ENCODE measurements at regions of chr1 and their contacts with region 1.

Region 1: DNA sequence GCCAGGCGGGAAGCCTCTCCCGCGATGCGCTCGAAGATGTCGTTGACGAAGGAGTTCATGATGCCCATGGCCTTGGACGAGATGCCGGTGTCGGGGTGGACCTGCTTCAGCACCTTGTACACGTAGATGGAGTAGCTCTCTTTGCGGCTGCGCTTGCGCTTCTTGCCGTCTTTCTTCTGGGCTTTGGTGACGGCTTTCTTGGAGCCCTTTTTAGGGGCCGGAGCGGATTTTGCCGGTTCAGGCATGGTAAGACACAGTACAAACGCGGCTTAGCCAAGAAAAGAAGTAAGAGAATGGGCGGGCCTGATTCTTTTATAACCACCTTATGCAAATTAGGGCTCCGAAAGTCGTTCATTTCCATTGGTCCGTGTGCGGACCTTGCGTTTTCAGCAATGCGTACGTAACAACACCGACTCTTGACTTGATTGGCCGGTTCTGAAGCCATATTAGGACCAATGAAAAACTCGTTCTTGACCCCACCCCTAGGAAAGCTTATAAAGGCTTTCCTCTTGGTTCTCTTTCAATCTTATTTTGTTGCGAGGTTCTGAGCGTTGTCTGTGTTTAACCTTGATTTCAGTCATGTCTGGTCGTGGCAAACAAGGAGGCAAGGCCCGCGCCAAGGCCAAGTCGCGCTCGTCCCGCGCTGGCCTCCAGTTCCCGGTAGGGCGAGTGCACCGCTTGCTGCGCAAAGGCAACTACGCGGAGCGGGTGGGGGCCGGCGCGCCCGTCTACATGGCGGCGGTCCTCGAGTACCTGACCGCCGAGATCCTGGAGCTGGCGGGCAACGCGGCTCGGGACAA is 12.8 kb upstream of the BOLA1 start:
- DNase-seq: peak; percentile 91
- H3K4me3 Mint-ChIP-seq: no peak overlapping the region
- H3K27ac Mint-ChIP-seq: no peak overlapping the region
- H3K4me1 Mint-ChIP-seq: peaks cover 10% of the 10 kb centered on the region
- H3K27me3 Mint-ChIP-seq: no peaks in the 10 kb centered on the region

Region 2: GRCh38 chr1:149844101-149844500 is 42.5 kb before region 1 on chr1:
- CTCF ChIA-PET with region 1: interaction called, 3 read pairs
- POLR2A ChIA-PET with region 1: interaction called, 118 read pairs
- intact Hi-C with region 1: no loop called
- DNase-seq: peak; percentile 36
- H3K4me3 Mint-ChIP-seq: peak overlapping the region; percentile 84
- H3K27ac Mint-ChIP-seq: peak overlapping the region; percentile 92
- H3K4me1 Mint-ChIP-seq: peaks cover 48% of the 10 kb centered on the region
- H3K27me3 Mint-ChIP-seq: no peaks in the 10 kb centered on the region

Region 3: GRCh38 chr1:149899460-149900293 is 13.1 kb after region 1 on chr1 and contains the start of gene BOLA1:
- CTCF ChIA-PET with region 1: interaction called, 7 read pairs
- POLR2A ChIA-PET with region 1: interaction called, 29 read pairs
- intact Hi-C with region 1: no loop called
- DNase-seq: peak; percentile 90
- H3K4me3 Mint-ChIP-seq: peak within 1 kb of the TSS; percentile 90
- H3K27ac Mint-ChIP-seq: peak within 1 kb of the TSS; percentile 94
- H3K4me1 Mint-ChIP-seq: peaks cover 19% of the 10 kb centered on the region
- H3K27me3 Mint-ChIP-seq: no peaks in the 10 kb centered on the region
- total RNA-seq, gene BOLA1: 27.9 to 29.6 TPM

Region 4: DNA sequence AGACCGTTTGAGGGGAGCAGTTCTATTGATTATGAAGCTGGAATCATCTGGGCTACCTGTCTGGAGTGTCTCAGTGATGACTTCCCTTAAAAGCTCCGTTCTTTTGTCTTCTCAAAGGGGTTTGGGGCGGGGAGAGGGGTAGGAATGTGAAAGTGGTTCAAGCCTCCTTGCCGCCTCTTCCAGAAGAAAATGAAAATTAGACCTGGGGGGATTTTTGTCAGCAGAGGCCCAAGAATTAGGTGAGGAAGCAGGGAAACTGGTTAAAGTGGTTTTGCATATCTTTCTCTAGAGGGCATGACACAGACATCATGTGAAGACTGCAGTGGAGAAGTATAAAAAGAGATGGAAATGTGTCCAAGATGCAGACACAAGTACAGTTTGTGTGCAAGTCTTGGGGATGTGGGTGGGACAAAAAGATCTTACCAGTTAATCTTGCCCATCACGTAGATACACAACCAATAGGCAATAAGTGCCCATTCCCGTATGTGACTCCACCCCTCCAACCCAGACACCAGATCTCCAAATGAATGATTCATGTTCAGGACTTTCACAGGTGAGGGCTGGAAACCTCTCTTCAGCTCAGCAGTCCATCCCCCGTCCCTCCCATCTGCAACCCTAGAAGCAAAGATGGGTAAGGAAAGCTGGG is 50.6 kb after region 1 on chr1:
- CTCF ChIA-PET with region 1: no interaction called
- POLR2A ChIA-PET with region 1: interaction called, 13 read pairs
- intact Hi-C with region 1: no loop called
- DNase-seq: no peak
- H3K4me3 Mint-ChIP-seq: no peak overlapping the region
- H3K27ac Mint-ChIP-seq: peak overlapping the region; percentile 25
- H3K4me1 Mint-ChIP-seq: peaks cover 31% of the 10 kb centered on the region
- H3K27me3 Mint-ChIP-seq: no peaks in the 10 kb centered on the region

Region 5: GRCh38 chr1:150010393-150011115 is 124.0 kb after region 1 on chr1 and contains the start of gene OTUD7B:
- CTCF ChIA-PET with region 1: interaction called, 8 read pairs
- POLR2A ChIA-PET with region 1: interaction called, 57 read pairs
- intact Hi-C with region 1: no loop called
- DNase-seq: peak; percentile 87
- H3K4me3 Mint-ChIP-seq: peak within 1 kb of the TSS; percentile 99
- H3K27ac Mint-ChIP-seq: peak within 1 kb of the TSS; percentile 98
- H3K4me1 Mint-ChIP-seq: peaks cover 39% of the 10 kb centered on the region
- H3K27me3 Mint-ChIP-seq: no peaks in the 10 kb centered on the region
- total RNA-seq, gene OTUD7B: 23.8 to 24.7 TPM

Region 6: GRCh38 chr1:150024156-150024555 is 137.6 kb after region 1 on chr1:
- CTCF ChIA-PET with region 1: no interaction called
- POLR2A ChIA-PET with region 1: no interaction called
- intact Hi-C with region 1: no loop called
- DNase-seq: no peak
- H3K4me3 Mint-ChIP-seq: no peak overlapping the region
- H3K27ac Mint-ChIP-seq: no peak overlapping the region
- H3K4me1 Mint-ChIP-seq: no peaks in the 10 kb centered on the region
- H3K27me3 Mint-ChIP-seq: no peaks in the 10 kb centered on the region

Region 7: DNA sequence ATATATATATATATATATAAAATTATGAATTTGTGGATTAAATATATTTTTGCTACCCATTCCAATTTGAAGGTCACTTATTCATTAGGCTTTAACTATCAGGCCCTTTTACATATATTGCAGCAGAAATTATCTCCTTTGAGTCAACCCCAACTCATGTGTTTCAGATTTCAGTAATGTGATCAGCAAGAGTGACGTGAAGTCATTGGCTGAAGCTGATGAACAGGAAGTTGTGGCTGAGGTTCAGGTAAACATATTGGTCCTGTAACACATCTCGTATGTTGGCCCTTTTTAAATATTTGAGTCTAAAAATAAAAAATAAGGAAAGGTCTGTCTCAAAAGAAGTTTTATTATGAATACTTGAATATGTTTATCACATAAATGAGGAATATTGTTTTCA is 189.5 kb after region 1 on chr1:
- CTCF ChIA-PET with region 1: no interaction called
- POLR2A ChIA-PET with region 1: no interaction called
- intact Hi-C with region 1: no loop called
- DNase-seq: no peak
- H3K4me3 Mint-ChIP-seq: no peak overlapping the region
- H3K27ac Mint-ChIP-seq: no peak overlapping the region
- H3K4me1 Mint-ChIP-seq: peaks cover 11% of the 10 kb centered on the region
- H3K27me3 Mint-ChIP-seq: no peaks in the 10 kb centered on the region

Region 8: DNA sequence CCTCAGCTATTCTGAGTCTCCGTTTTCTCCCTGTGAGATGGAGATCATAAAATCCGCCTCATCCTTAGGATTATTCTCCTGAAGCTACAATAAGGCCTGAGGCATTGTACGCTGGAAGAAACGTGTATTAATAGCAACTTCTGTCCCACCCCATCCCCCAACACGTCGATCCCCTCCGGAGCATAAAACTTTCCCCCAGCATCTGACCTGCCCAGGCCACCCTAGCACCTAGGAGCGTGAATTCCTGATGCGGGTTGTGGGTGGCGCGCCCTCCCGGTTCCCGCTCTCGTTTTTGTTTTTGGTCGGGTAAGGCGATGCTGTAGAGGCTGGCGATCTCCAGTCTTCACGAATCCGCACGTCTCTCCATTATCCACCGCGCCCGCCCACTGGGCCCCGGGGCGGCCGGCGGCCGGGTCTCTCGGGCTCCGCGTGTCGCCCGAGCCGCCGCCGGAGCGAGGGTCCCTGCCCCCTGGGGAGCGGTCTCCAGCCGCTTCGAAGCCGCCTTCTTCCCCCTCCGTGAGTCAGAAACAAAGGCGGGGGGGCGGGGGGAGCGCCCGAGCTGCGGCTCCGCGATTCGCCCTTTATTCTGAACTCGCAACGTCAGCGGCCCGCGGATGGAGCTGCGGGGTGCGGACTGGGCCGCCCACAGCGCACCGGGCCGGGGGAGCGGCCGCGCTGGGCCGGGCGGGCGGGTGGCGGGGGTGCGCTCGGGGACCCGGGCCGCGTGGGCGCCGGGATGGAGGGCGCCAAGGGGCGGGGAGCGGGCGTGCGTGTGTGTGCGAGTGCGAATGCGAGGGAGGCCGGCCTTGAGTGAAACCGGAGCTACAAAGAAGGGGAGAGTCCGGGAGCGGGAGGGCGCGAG is 262.9 kb after region 1 on chr1 and contains the start of gene PLEKHO1:
- CTCF ChIA-PET with region 1: no interaction called
- POLR2A ChIA-PET with region 1: interaction called, 13 read pairs
- intact Hi-C with region 1: no loop called
- DNase-seq: peak; percentile 90
- H3K4me3 Mint-ChIP-seq: peak within 1 kb of the TSS; percentile 90
- H3K27ac Mint-ChIP-seq: peak within 1 kb of the TSS; percentile 93
- H3K4me1 Mint-ChIP-seq: peaks cover 68% of the 10 kb centered on the region
- H3K27me3 Mint-ChIP-seq: no peaks in the 10 kb centered on the region
- total RNA-seq, gene PLEKHO1: 28.7 to 31.8 TPM

Region 9: DNA sequence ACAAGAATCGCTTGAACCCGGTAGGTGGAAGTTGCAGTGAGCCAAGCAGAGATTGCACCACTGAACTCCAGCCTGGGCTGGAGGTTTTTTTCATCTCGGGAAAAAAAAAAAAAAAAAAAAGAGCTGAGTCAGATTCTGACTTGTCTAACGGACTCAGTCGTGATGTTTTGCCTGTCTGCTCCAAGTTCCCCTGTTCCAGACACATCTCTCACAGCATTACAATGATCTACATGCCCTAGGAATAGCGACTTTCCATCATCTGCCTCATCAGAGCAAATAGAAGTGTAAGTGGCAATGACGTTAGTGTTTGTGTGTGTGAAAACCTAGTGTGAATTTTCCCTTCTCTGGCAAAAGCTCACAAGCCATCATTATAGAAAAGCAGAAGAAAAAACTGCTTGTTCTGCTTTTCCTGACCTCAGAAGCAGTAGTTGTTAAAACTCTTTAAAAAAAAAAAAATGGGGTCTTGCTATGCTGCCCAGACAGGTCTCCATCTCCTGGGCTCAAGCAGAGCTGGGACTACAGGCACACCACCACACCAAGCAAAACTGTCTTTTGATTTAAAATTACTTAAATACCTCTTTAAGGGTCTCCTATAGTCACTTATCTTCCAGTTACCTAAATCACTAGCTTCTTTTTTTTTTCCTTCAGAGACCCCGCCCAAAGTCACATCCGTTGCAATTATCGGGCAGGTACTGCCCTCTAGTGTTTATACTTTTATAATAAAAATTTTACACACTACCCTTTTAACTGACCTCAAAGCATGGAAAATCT is 300.4 kb after region 1 on chr1:
- CTCF ChIA-PET with region 1: interaction called, 19 read pairs
- POLR2A ChIA-PET with region 1: interaction called, 16 read pairs
- intact Hi-C with region 1: no loop called
- DNase-seq: peak; percentile 19
- H3K4me3 Mint-ChIP-seq: peak overlapping the region; percentile 44
- H3K27ac Mint-ChIP-seq: peak overlapping the region; percentile 56
- H3K4me1 Mint-ChIP-seq: peaks cover 14% of the 10 kb centered on the region
- H3K27me3 Mint-ChIP-seq: no peaks in the 10 kb centered on the region

Region 10: DNA sequence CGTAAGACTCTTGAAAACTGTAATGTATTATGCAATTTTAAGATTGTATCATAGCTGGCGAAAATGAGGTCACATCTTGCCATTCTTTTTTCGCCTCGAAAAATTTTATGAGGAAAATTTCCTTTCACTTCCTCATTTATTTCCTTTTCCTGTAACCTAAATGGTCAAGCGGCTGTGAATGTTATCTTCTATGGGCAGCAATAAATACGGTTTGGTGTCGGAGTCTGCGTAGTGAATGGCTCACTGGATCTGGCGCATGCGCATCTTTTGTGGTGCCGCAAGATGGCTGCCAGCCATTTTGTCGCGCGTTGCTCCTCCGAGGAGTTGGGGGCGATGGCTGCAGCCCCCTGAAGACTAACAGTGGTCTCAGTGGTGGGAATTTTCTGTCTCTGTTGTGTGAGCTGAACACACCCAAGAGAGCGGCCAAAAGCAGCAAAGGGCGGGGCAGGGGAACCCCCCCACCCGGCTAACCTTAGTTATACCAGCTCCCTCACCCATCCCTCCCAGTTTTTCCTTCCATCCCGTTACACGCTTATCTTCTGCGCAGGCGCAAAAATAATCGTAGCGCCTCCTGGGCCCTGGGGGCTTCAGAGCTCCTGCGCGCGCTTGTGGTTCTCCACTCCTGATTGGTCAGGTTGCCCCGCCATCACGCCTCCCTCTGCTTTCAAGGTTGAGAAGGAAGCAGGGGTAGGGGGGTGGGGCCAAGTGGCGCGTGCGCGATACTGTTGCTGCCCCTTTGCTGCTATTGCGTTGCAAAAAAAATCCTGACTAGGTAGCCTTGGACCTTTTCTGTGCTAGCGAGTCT is 477.0 kb after region 1 on chr1 and contains the start of gene RPRD2:
- CTCF ChIA-PET with region 1: no interaction called
- POLR2A ChIA-PET with region 1: no interaction called
- intact Hi-C with region 1: no loop called
- DNase-seq: peak; percentile 100
- H3K4me3 Mint-ChIP-seq: peak within 1 kb of the TSS; percentile 99
- H3K27ac Mint-ChIP-seq: peak within 1 kb of the TSS; percentile 100
- H3K4me1 Mint-ChIP-seq: peaks cover 19% of the 10 kb centered on the region
- H3K27me3 Mint-ChIP-seq: peaks cover 1% of the 10 kb centered on the region
- total RNA-seq, gene RPRD2: 22.2 to 22.6 TPM

Measured in activated CD4-positive, alpha-beta memory T cell treated with anti-CD3 and anti-CD28 coated beads for 36 hours (primary cell).